ENCODE measurements at regions of chr2 and their contacts with region 1.

Region 1: DNA sequence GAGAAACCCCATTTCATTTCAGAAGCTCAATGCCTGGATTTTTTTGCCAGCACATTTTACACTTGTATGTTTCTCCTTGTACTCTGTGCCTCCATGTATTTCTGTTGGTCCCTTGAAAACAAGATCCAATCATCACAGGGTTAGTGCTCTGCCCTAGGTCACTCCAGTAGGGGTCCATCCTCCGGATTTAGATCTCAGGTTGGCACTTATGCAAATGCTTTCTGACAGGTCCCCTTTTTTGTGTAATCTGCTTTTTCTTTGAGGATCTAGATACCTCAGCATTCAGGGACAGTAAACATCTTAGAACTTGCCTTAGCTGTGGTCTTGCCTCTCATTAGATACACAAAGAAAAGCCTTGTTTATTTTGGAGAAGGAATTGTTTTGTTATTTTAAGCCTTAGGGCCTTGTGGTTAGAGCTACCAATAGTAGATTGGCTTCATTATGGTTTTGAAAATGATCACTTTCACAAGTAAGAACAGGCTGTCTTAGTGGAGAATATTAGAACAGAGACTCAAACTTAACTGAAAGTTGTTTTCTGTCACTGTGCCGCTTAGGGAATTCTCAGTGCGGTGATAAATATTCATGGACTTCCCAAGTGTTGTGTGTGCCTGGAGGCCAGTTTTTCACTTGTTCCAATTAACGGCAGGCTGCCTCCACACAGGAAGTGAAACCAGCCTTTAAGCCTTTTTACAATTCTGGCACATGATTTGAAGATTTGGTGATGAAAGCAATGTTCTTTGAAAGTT is 7.8 kb downstream of the MERTK start:
- DNase-seq: peak; percentile 47
- ATAC-seq: peak; percentile 82
- H3K4me3 ChIP-seq: peak overlapping the region; percentile 15; the same call in 1 of the 2 replicates
- H3K27ac ChIP-seq: no peak overlapping the region
- H3K4me1 ChIP-seq: peaks cover 10% of the 10 kb centered on the region
- H3K27me3 ChIP-seq: no peaks in the 10 kb centered on the region
- CTCF ChIP-seq: no peak
- EP300 ChIP-seq: peak; percentile 10 to 60; a peak in 2 of 4 replicates
- POLR2A ChIP-seq: no peak
- RAD21 ChIP-seq: no peak

Region 2: GRCh38 chr2:111919794-111920608 is 13.8 kb after region 1 on chr2:
- CTCF ChIA-PET with region 1: interaction called, 33 read pairs
- POLR2A ChIA-PET with region 1: interaction called, 7 read pairs
- RAD21 ChIA-PET with region 1: interaction called, 9 read pairs
- SMC1A ChIA-PET with region 1: interaction called, 7 read pairs
- in situ Hi-C with region 1: no loop called
- intact Hi-C with region 1: no loop called
- DNase-seq: no peak
- ATAC-seq: 0 out of 3 replicates have a peak, but pooled peaks have one; percentile 25
- H3K4me3 ChIP-seq: no peak overlapping the region
- H3K27ac ChIP-seq: no peak overlapping the region
- H3K4me1 ChIP-seq: no peaks in the 10 kb centered on the region
- H3K27me3 ChIP-seq: no peaks in the 10 kb centered on the region; a peak in 1 of 4 replicates
- CTCF ChIP-seq: no peak
- EP300 ChIP-seq: no peak
- POLR2A ChIP-seq: no peak
- RAD21 ChIP-seq: no peak

Region 3: GRCh38 chr2:112004253-112004645 is 98.1 kb after region 1 on chr2:
- CTCF ChIA-PET with region 1: interaction called, 8 read pairs
- POLR2A ChIA-PET with region 1: interaction called, 5 read pairs
- RAD21 ChIA-PET with region 1: interaction called, 14 read pairs
- SMC1A ChIA-PET with region 1: interaction called, 8 read pairs
- in situ Hi-C with region 1: no loop called
- intact Hi-C with region 1: no loop called
- DNase-seq: peak; percentile 12
- ATAC-seq: peak; percentile 83
- H3K4me3 ChIP-seq: no peak overlapping the region
- H3K27ac ChIP-seq: no peak overlapping the region
- H3K4me1 ChIP-seq: peaks cover 15% of the 10 kb centered on the region
- H3K27me3 ChIP-seq: no peaks in the 10 kb centered on the region
- CTCF ChIP-seq: no peak
- EP300 ChIP-seq: no peak
- POLR2A ChIP-seq: no peak
- RAD21 ChIP-seq: no peak

Region 4: DNA sequence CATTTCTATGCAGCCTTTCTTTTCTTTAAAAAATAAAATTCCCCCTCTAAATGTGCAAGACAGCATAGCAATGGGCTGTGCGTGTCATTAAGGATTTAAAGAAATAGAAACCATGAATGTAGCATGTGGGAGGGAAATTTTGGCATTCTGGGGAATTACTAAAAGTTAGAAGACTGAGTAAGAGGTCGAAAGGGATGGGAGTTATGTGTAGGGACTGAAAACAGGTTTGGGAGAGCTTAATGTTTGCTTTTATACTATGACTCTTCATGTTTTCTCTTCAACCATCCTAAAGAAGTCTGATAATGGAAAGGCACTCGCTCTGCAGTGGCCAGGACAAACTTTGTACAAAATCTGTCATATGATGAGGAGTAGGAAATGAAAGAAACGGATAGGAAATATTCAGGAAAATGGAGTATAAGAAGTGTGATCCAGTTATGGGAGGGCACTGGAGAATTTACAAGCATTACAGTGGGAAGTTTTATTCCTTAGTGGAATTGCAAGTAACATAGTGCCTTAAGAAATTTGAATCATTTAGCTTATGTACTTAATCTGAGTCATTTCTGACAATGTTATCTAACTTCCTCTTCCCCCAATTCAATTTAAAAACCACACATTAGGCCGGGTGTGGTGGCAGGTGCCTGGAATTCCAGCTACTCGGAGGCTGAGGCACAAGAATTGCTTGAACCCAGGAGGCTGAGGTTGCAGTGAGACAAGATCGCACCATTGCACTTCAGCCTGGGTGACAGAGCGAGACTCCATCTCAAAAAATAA is 169.5 kb after region 1 on chr2:
- CTCF ChIA-PET with region 1: no interaction called
- POLR2A ChIA-PET with region 1: no interaction called
- RAD21 ChIA-PET with region 1: no interaction called
- SMC1A ChIA-PET with region 1: no interaction called
- in situ Hi-C with region 1: no loop called
- intact Hi-C with region 1: no loop called
- DNase-seq: no peak
- ATAC-seq: peak; percentile 41
- H3K4me3 ChIP-seq: no peak overlapping the region
- H3K27ac ChIP-seq: peak overlapping the region; percentile 67; the same call in 1 of the 2 replicates
- H3K4me1 ChIP-seq: peaks cover 9% of the 10 kb centered on the region
- H3K27me3 ChIP-seq: no peaks in the 10 kb centered on the region
- CTCF ChIP-seq: no peak
- EP300 ChIP-seq: no peak
- POLR2A ChIP-seq: no peak
- RAD21 ChIP-seq: no peak

Region 5: GRCh38 chr2:112181571-112182290 is 275.6 kb after region 1 on chr2:
- CTCF ChIA-PET with region 1: no interaction called
- POLR2A ChIA-PET with region 1: no interaction called
- RAD21 ChIA-PET with region 1: no interaction called
- SMC1A ChIA-PET with region 1: no interaction called
- in situ Hi-C with region 1: no loop called
- intact Hi-C with region 1: no loop called
- DNase-seq: no peak
- ATAC-seq: peak; percentile 37; the same call in 2 of the 3 replicates
- H3K4me3 ChIP-seq: no peak overlapping the region
- H3K27ac ChIP-seq: no peak overlapping the region
- H3K4me1 ChIP-seq: no peaks in the 10 kb centered on the region
- H3K27me3 ChIP-seq: peaks cover 0 to 7% of the 10 kb centered on the region in 2 experiments
- CTCF ChIP-seq: no peak
- EP300 ChIP-seq: no peak
- POLR2A ChIP-seq: no peak
- RAD21 ChIP-seq: no peak